ENCODE measurements at regions of chr12 and their contacts with region 1.

Region 1: GRCh38 chr12:110431957-110432587 is 18.1 kb downstream of the ARPC3 start:
- DNase-seq: no peak
- H3K4me3 Mint-ChIP-seq: peak overlapping the region; percentile 97
- H3K27ac Mint-ChIP-seq: peak overlapping the region; percentile 93
- H3K4me1 Mint-ChIP-seq: peaks cover 5% of the 10 kb centered on the region
- H3K27me3 Mint-ChIP-seq: no peaks in the 10 kb centered on the region
- CTCF ChIP-seq: no peak

Region 2: DNA sequence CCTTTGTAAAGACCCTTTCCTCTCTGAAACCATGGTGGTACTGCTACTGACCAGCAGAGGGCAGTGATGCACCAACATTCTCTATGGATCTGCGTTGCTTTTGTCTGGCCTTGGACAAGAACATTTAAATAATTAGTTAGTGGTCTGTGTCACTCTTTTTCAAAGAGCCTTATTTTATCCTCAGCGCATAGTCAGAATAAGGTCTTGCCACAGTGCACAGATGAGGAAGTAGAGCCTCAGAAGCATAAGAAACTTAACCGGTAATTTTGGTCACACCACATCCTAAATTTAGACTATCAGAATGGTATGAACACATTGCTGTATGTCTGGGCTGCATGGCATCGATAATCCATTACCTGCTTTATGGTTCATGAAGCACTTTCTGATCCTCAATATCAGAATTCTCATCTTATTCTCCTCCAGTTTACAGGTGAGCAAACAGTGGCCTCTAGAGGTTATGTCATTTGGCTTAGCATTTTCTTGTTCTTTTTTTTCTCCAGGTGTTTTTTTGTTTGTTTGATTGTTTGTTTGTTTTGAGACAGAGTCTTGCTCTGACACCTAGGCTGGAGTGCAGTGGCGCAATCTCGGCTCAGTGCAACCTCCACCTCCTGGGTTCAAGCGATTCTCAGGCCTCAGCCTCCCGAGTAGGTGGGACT is 331.6 kb before region 1 on chr12:
- CTCF ChIA-PET with region 1: interaction called, 51 read pairs
- POLR2A ChIA-PET with region 1: interaction called, 15 read pairs
- intact Hi-C with region 1: loop called (anchors 1 kb)
- DNase-seq: peak; percentile 78
- H3K4me3 Mint-ChIP-seq: no peak overlapping the region
- H3K27ac Mint-ChIP-seq: no peak overlapping the region
- H3K4me1 Mint-ChIP-seq: peaks cover 7% of the 10 kb centered on the region
- H3K27me3 Mint-ChIP-seq: no peaks in the 10 kb centered on the region
- CTCF ChIP-seq: peak; percentile 85

Region 3: DNA sequence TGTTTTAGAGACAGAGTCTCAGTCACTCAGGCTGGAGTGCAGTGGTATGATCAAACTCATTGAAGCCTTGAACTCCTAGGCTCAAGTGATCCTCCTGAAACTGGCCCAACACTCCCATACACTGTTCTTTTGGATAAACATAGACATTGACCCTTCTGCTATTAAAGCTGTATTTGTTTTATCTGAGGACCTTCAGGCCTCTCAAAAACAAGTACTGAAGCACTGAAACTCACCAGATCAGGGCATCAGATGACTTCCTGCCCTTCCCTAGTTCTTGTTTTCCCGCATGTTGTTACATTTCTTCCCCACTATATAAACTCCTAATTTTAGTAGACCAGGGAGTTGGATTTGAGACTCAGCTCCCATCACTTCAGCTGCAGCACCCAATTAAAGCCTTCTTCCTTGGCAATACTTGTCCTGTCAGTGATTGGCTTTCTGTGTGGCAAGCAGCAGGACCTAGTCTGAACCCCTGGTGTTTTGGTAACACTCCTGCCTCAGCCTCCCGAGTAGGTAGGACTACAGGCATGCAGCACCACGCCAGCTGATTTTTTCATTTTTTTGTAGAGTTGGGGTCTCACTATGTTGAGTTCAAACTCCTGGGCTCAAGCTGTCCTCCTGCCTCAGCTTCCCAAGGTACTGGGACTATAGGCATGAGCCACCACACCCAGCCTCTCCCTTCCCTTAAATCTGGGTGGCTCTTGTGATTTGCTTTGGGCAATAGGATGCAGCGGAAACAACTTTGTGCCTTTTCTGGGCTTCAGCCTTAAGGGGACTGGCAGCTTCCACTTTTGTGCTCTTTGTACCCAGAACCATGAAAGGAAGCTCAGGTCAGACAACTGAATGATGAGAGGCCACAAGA is 320.4 kb before region 1 on chr12:
- CTCF ChIA-PET with region 1: interaction called, 10 read pairs
- POLR2A ChIA-PET with region 1: interaction called, 3 read pairs
- intact Hi-C with region 1: no loop called
- DNase-seq: no peak
- H3K4me3 Mint-ChIP-seq: no peak overlapping the region
- H3K27ac Mint-ChIP-seq: no peak overlapping the region
- H3K4me1 Mint-ChIP-seq: peaks cover 20% of the 10 kb centered on the region
- H3K27me3 Mint-ChIP-seq: no peaks in the 10 kb centered on the region
- CTCF ChIP-seq: no peak

Region 4: DNA sequence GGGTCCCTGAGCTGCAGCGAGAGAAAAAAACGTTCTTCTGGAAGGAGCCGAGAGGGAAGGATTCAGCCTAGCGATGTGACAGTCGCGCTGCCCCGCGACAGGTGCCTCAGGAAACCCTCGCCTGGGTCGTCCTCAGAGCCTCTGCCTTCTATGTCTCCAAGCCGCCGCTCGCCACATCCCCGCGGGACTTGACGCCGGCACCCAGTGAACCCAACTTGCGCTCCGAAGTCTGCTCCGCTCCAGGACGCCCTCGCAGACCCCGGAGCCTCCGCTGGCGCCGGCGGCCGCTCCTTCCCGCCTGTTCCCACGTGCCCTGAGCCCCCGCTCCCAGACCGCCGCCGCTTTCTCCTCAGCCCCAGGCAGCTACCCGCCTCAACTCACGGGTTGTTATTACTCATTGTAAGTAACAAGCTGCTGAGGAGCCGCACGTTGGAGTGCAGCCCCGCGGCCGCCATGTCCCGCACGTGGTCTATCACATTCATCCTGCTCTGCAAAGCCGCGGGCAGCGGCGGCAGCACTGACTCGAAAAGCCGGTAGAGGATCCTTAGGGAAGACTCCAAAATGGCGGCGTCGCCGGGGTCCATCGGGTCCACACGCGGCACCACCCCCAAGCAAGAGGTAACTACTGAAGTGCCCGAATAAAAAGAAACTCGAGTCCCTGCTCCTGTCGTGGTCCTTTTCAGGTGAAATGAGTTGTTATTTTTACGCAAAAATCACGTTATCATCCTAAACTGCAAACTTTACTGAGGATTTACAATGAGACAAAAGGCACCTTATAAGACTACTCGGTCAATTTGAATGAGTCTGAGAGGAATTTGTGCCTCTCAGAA is 28.7 kb before region 1 on chr12 and contains the start of gene ANAPC7:
- CTCF ChIA-PET with region 1: interaction called, 6 read pairs
- POLR2A ChIA-PET with region 1: interaction called, 9 read pairs
- intact Hi-C with region 1: loop called (anchors 2 kb)
- DNase-seq: peak; percentile 87
- H3K4me3 Mint-ChIP-seq: peak within 1 kb of the TSS; percentile 100
- H3K27ac Mint-ChIP-seq: peak within 1 kb of the TSS; percentile 100
- H3K4me1 Mint-ChIP-seq: peaks cover 6% of the 10 kb centered on the region
- H3K27me3 Mint-ChIP-seq: no peaks in the 10 kb centered on the region
- CTCF ChIP-seq: no peak
- total RNA-seq, gene ANAPC7: 76.3 and 87.1 TPM in 2 replicates

Region 5: GRCh38 chr12:110421159-110421661 is 10.9 kb before region 1 on chr12:
- CTCF ChIA-PET with region 1: interaction called, 17 read pairs
- POLR2A ChIA-PET with region 1: interaction called, 7 read pairs
- intact Hi-C with region 1: no loop called
- DNase-seq: no peak
- H3K4me3 Mint-ChIP-seq: no peak overlapping the region
- H3K27ac Mint-ChIP-seq: no peak overlapping the region
- H3K4me1 Mint-ChIP-seq: no peaks in the 10 kb centered on the region
- H3K27me3 Mint-ChIP-seq: peaks cover 11% of the 10 kb centered on the region
- CTCF ChIP-seq: no peak

Region 6: GRCh38 chr12:110449799-110450497 is 17.9 kb after region 1 on chr12 and contains the start of gene ARPC3:
- CTCF ChIA-PET with region 1: interaction called, 9 read pairs
- POLR2A ChIA-PET with region 1: interaction called, 14 read pairs
- intact Hi-C with region 1: no loop called
- DNase-seq: peak; percentile 93
- H3K4me3 Mint-ChIP-seq: peak within 1 kb of the TSS; percentile 99
- H3K27ac Mint-ChIP-seq: peak within 1 kb of the TSS; percentile 100
- H3K4me1 Mint-ChIP-seq: peaks cover 5% of the 10 kb centered on the region
- H3K27me3 Mint-ChIP-seq: no peaks in the 10 kb centered on the region
- CTCF ChIP-seq: peak; percentile 83
- total RNA-seq, gene ARPC3: 230 and 245 TPM in 2 replicates

Region 7: GRCh38 chr12:110475426-110475825 is 43.4 kb after region 1 on chr12:
- CTCF ChIA-PET with region 1: no interaction called
- POLR2A ChIA-PET with region 1: no interaction called
- intact Hi-C with region 1: no loop called
- DNase-seq: no peak
- H3K4me3 Mint-ChIP-seq: no peak overlapping the region
- H3K27ac Mint-ChIP-seq: no peak overlapping the region
- H3K4me1 Mint-ChIP-seq: no peaks in the 10 kb centered on the region
- H3K27me3 Mint-ChIP-seq: no peaks in the 10 kb centered on the region
- CTCF ChIP-seq: no peak

Region 8: GRCh38 chr12:111006621-111007020 is 574.5 kb after region 1 on chr12:
- CTCF ChIA-PET with region 1: no interaction called
- POLR2A ChIA-PET with region 1: no interaction called
- intact Hi-C with region 1: no loop called
- DNase-seq: no peak
- H3K4me3 Mint-ChIP-seq: no peak overlapping the region
- H3K27ac Mint-ChIP-seq: no peak overlapping the region
- H3K4me1 Mint-ChIP-seq: no peaks in the 10 kb centered on the region
- H3K27me3 Mint-ChIP-seq: peaks cover 48% of the 10 kb centered on the region
- CTCF ChIP-seq: no peak

Region 9: GRCh38 chr12:111616177-111616623 is 1184.1 kb after region 1 on chr12:
- CTCF ChIA-PET with region 1: no interaction called
- POLR2A ChIA-PET with region 1: no interaction called
- intact Hi-C with region 1: no loop called
- DNase-seq: no peak
- H3K4me3 Mint-ChIP-seq: no peak overlapping the region
- H3K27ac Mint-ChIP-seq: no peak overlapping the region
- H3K4me1 Mint-ChIP-seq: no peaks in the 10 kb centered on the region
- H3K27me3 Mint-ChIP-seq: no peaks in the 10 kb centered on the region
- CTCF ChIP-seq: no peak

Measured in MCF 10A (cell line).